Right cardiac atrium (tissue), 5 donors: ENCODE measurements at regions of chr5 and their contacts with region 1.

Region 1: DNA sequence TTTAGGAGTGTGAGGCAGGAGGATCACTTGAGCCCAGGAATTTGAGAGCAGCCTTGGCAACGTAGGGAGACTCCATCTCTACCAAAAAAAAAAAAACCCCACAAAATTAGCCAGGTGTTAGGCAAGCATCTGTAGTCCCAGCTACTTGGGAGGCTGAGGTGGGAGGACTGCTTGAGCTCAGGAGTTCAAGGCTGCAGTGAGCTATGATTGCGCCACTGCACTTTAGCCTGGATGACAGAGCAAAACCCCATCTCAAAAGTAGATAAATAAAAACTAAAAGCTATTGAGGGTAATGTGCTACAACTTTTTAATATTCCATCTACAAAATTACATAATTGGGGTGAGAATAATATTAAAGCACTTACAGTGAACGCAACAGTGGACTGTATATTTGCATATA is 5.9 kb downstream of the BDP1 start:
- DNase-seq: no peak
- ATAC-seq: no peak
- H3K4me3 ChIP-seq: no peak overlapping the region
- H3K27ac ChIP-seq: no peak overlapping the region
- H3K4me1 ChIP-seq: no peaks in the 10 kb centered on the region
- H3K27me3 ChIP-seq: no peaks in the 10 kb centered on the region

Region 2: GRCh38 chr5:71522151-71522550 is 60.8 kb after region 1 on chr5:
- intact Hi-C with region 1: loop called in 1 of 4 experiments (anchors 10 kb)
- DNase-seq: no peak
- ATAC-seq: no peak
- H3K4me3 ChIP-seq: no peak overlapping the region
- H3K27ac ChIP-seq: no peak overlapping the region
- H3K4me1 ChIP-seq: no peaks in the 10 kb centered on the region
- H3K27me3 ChIP-seq: no peaks in the 10 kb centered on the region

Region 3: DNA sequence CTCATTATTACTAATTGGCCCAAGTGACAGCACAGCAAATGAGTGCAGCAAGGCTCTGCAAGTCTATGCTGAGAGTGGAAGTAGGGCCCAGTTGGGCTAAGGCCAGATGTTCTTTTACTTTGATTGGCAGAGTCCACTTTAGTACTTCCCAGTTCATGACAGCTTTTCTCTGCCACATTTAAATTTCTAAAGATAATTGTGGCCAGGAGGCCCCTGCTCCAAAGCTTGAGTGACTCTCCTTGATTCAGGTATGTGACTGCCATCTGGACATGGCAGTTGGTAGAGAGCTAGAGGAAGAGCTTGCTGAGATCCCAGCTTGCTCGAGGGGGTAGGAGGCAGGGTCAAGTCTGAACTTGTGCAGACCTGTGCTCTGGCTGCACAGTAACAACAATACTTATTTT is 411.8 kb after region 1 on chr5:
- intact Hi-C with region 1: no loop called
- DNase-seq: no peak
- ATAC-seq: peak in 1 of 2 donors; percentile 31
- H3K4me3 ChIP-seq: no peak overlapping the region
- H3K27ac ChIP-seq: no peak overlapping the region
- H3K4me1 ChIP-seq: no peaks in the 10 kb centered on the region
- H3K27me3 ChIP-seq: no peaks in the 10 kb centered on the region